Mammary epithelial cell (primary cell): ENCODE measurements at regions of chr17 and their contacts with region 1.

Region 1: GRCh38 chr17:2511462-2512369 is at the start of gene METTL16:
- DNase-seq: peak; percentile 98
- H3K4me3 ChIP-seq: peak within 1 kb of the TSS; percentile 78 to 94 (median 82)
- H3K27ac ChIP-seq: peak within 1 kb of the TSS; percentile 96
- H3K4me1 ChIP-seq: peaks cover 9% of the 10 kb centered on the region
- H3K27me3 ChIP-seq: no peaks in the 10 kb centered on the region
- CTCF ChIP-seq: no peak
- total RNA-seq, gene METTL16: 15.2 to 28.0 TPM

Region 2: DNA sequence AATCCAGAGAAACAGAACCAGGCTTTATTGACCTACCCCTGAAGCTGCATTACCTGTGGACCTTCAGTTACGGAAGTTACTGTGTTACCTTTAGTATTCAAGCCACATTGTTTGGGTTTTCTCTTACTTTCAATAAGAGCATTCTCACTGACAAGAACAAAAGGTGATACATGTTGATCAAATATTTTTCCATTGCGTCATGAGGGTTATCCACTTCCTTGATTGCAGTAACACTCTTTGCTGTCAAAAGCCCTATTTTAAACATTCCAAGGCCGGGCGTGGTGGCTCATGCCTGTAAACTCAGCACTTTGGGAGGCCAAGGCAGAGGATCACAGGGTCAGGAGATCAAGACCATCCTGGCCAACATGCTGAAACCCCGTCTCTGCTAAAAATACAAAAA is 53.2 kb after region 1 on chr17:
- CTCF ChIA-PET with region 1: no interaction called
- dilution Hi-C with region 1: no loop called
- in situ Hi-C with region 1: no loop called
- intact Hi-C with region 1: loop called (anchors 2 kb)
- DNase-seq: peak; percentile 82
- H3K4me3 ChIP-seq: no peak overlapping the region
- H3K27ac ChIP-seq: peak overlapping the region; percentile 80
- H3K4me1 ChIP-seq: peaks cover 27% of the 10 kb centered on the region
- H3K27me3 ChIP-seq: no peaks in the 10 kb centered on the region
- CTCF ChIP-seq: no peak

Region 3: DNA sequence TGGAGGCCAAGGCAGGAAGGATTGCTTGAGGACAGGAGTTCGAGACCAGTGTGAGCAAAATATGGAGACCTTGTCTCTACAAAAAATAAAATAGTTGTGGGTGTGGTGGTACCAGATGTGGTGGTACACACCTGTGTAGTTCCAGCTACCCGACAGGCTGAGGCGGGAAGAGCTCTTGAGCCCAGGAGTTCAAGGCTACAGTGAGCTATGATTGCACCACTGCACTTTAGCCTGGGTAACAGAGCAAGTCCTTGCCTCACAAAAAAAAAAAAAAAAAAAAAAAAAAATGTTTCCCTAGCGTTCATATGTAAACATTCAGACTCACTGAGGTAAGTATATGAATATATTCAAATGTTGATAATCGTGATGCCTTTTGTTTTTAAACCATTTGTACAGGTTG is 160.3 kb after region 1 on chr17:
- CTCF ChIA-PET with region 1: no interaction called
- dilution Hi-C with region 1: no loop called
- in situ Hi-C with region 1: no loop called
- intact Hi-C with region 1: loop called (anchors 2 kb)
- DNase-seq: no peak
- H3K4me3 ChIP-seq: no peak overlapping the region
- H3K27ac ChIP-seq: no peak overlapping the region
- H3K4me1 ChIP-seq: no peaks in the 10 kb centered on the region
- H3K27me3 ChIP-seq: no peaks in the 10 kb centered on the region
- CTCF ChIP-seq: no peak